CD4-positive, alpha-beta memory T cell (primary cell): ENCODE measurements at regions of chr3 and their contacts with region 1.

Region 1: DNA sequence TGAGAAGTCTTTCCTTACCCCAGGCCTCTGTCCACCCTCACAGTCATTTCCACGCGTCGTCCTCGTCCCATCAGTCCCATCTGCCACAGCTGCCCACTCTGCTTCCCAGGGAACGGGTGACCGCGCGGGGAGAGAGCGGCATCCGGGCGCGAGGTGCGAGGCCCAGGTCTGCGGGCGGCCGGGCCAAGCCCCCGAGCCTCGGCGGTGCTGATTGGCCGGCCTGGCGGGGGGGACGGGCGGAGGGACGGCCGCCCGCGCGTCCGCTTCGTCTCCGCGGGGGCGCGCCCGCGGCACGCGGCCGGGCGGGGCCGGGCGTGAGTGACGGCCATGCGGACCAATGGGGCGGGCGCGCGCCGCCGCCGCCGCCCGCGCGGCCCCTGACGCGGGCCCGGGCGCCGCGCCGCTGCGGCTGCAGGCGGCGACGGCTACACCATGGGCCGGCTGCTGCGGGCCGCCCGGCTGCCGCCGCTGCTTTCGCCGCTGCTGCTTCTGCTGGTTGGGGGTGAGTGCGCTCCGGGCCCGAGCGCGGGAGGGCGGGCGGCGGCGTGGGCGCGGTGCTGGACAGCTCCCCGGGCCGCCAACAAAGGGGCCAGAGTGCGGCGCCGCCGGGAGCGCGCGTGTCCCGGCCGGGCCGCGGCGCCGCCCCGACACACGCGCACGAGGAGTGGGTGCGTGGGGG is at the start of gene PODXL2:
- DNase-seq: peak in 4 of 5 donors; percentile 34 to 51 (median 36)
- H3K4me3 ChIP-seq: peak within 1 kb of the TSS; percentile 44 to 67
- H3K4me3 Mint-ChIP-seq: peak within 1 kb of the TSS; percentile 85 to 94 (median 89)
- H3K27ac ChIP-seq: no peak within 1 kb of the TSS
- H3K27ac Mint-ChIP-seq: peak within 1 kb of the TSS; percentile 78 to 91 (median 89)
- H3K4me1 ChIP-seq: peaks cover 21% of the 10 kb centered on the region
- H3K4me1 Mint-ChIP-seq: peaks cover 29 to 53% (median 37%) of the 10 kb centered on the region in 4 donors
- H3K27me3 ChIP-seq: peaks cover 4% of the 10 kb centered on the region
- H3K27me3 Mint-ChIP-seq: peaks cover 10 to 14% of the 10 kb centered on the region in 2 donors
- total RNA-seq, gene PODXL2: 3.3 to 4.2 TPM

Region 2: DNA sequence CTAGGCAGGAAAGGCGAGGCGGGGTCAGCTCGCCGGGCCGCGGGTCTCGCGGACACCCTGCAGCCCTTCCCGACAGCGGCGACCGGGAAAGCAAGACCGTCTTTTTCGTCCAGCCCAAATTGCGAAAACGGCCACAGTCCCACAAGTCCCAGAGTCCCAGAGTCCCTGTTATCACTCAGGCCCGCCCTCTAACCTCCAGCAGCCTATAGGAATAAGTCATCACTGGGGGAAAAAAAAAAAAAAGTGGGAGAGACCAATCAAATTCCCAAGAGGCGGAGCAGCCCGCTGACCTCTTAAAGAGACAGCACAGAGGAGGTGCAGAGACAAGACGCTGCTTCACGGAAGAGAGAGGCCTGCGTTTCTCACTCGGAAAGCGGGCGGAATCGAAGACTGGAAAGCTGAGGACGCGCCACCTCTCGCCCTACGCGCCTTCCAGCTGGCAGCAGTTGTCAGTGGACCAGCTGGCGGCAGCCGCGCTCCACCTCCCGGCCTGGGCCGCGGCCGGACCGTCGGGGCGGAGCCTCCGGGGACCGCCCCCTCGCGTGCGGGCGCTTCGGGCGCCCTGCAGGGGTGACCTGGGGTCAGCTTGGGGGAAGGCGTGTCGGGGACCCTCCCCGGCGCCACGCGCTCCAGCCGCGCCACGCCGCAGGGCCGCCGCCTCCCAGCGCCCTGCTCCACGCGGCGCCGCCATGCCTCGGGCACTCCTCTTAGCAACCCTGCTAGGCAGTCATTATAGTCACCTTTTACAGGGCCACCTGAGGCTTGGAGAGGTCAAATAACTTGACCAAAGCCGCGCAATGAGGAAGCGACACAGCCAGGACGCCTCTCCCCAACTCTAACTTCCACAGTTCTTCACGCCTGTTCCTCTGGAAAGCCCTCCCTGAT is 38.1 kb before region 1 on chr3 and contains the start of gene TPRA1:
- CTCF ChIA-PET with region 1: no interaction called
- POLR2A ChIA-PET with region 1: interaction called, 12 read pairs
- intact Hi-C with region 1: no loop called
- DNase-seq: peak; percentile 83 to 90 (median 88)
- H3K4me3 ChIP-seq: peak within 1 kb of the TSS; percentile 81 to 83
- H3K4me3 Mint-ChIP-seq: peak within 1 kb of the TSS; percentile 96 to 100 (median 98)
- H3K27ac ChIP-seq: peak within 1 kb of the TSS; percentile 73
- H3K27ac Mint-ChIP-seq: peak within 1 kb of the TSS; percentile 93 to 98 (median 96)
- H3K4me1 ChIP-seq: peaks cover 26% of the 10 kb centered on the region
- H3K4me1 Mint-ChIP-seq: peaks cover 16 to 50% (median 36%) of the 10 kb centered on the region in 4 donors
- H3K27me3 ChIP-seq: no peaks in the 10 kb centered on the region
- H3K27me3 Mint-ChIP-seq: no peaks in the 10 kb centered on the region
- total RNA-seq, gene TPRA1: 28.3 to 29.7 TPM

Region 3: DNA sequence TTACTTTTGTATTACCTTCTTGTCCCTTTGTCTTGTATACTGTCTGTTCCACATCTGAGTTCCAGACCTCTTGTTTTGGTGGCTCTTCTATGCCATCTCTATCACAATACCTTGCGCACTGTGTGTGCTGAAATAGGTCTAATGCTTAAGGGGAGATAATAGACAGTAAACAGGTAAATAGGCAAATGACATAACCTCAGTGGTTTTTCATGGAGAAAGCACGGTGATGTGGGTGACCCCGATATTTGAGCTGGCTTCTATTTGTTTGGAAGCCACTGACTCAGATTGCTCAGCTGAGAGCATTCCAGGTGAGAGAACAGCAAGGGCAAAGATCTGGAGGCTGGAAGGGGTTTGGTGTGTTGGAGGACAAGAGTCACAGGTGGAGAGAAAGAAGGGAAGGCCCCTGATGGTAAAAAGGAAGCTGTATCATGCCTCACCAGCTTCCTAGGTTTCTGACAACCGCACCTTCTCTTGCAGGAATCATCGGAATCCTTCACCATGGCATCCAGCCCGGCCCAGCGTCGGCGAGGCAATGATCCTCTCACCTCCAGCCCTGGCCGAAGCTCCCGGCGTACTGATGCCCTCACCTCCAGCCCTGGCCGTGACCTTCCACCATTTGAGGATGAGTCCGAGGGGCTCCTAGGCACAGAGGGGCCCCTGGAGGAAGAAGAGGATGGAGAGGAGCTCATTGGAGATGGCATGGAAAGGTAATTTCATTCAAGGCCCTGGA is 29.9 kb before region 1 on chr3:
- CTCF ChIA-PET with region 1: no interaction called
- POLR2A ChIA-PET with region 1: interaction called, 7 read pairs
- intact Hi-C with region 1: loop called (anchors 2 kb)
- DNase-seq: no peak
- H3K4me3 ChIP-seq: peak overlapping the region; percentile 47 to 62
- H3K4me3 Mint-ChIP-seq: peak overlapping the region; percentile 78 to 90 (median 86)
- H3K27ac ChIP-seq: peak overlapping the region; percentile 51
- H3K27ac Mint-ChIP-seq: peak overlapping the region; percentile 22 to 97 (median 87)
- H3K4me1 ChIP-seq: peaks cover 19% of the 10 kb centered on the region
- H3K4me1 Mint-ChIP-seq: peaks cover 5 to 29% (median 15%) of the 10 kb centered on the region in 4 donors
- H3K27me3 ChIP-seq: no peaks in the 10 kb centered on the region
- H3K27me3 Mint-ChIP-seq: no peaks in the 10 kb centered on the region

Region 4: DNA sequence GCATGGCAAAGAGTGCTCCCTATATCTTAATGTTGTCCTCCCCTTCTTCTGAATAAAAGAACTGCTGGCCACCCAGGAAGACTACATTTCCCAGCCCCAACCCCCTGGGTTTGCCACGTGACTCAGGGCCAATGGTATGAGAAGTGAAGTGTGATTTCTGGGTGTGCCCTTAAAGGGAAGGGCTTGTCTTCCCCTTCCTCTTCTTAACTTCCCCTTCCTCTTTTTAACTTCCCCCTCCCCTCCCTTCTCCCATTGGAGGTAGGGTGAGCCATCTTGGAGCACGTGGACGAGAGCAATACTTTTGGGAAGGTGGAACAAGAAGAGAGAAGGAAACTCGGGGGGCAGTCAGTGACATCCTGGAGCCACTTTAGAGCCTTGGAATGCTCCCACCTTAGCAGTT is 279.3 kb after region 1 on chr3:
- CTCF ChIA-PET with region 1: no interaction called
- POLR2A ChIA-PET with region 1: no interaction called
- intact Hi-C with region 1: no loop called
- DNase-seq: no peak
- H3K4me3 ChIP-seq: no peak overlapping the region
- H3K4me3 Mint-ChIP-seq: no peak overlapping the region
- H3K27ac ChIP-seq: no peak overlapping the region
- H3K27ac Mint-ChIP-seq: no peak overlapping the region
- H3K4me1 ChIP-seq: no peaks in the 10 kb centered on the region
- H3K4me1 Mint-ChIP-seq: no peaks in the 10 kb centered on the region
- H3K27me3 ChIP-seq: no peaks in the 10 kb centered on the region
- H3K27me3 Mint-ChIP-seq: peaks cover 42 to 46% of the 10 kb centered on the region in 2 donors